ENCODE measurements at regions of chr2 and their contacts with region 1.

Region 1: DNA sequence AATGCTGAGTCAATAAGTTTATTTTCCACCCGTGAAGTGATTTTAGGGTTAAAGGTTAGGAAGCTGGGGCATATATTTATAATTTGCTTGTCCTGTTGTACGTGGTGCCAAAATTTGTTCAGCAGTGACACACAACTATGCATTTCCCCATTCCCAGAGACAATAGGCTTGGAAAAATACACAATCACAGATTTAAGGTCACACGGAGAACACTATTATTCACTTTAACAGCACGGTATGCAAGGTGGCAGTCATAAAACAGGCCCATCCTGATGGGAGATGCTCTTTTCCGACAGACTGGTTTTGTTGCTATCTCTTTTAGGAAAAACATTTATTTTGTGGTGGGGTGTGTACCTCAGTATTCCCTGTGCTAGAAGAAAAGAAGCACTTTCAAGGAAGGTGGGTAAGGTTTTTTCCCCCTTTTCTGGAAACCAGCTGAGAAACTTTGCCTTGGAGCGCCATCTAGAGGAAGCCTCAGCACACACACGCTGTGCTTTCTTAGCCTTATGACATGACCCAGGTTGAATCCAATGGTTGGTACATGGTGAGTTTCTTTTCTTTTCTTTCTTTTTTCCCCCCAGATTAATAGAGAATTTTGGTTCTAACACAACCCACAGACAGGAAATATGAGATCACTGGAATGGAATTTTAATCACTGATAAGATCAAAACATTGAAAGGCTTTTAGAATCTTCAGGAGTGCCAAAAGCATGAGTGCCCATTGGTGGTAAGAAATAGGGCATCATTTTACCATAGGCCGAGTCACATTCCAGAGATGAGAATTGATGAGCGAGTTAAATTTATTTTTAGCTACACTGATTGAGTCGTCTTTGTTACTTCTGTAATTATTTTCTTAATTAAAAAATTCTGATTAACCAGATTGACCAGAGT is 332.1 kb downstream of the AGPS start:
- DNase-seq: peak; percentile 42
- ATAC-seq: peak; percentile 51
- H3K4me3 ChIP-seq: no peak overlapping the region
- H3K4me3 Mint-ChIP-seq: no peak overlapping the region
- H3K27ac ChIP-seq: no peak overlapping the region
- H3K27ac Mint-ChIP-seq: no peak overlapping the region
- H3K4me1 ChIP-seq: no peaks in the 10 kb centered on the region
- H3K4me1 Mint-ChIP-seq: no peaks in the 10 kb centered on the region
- H3K27me3 ChIP-seq: peaks cover 0 to 3% (median 0%) of the 10 kb centered on the region in 4 experiments
- H3K27me3 Mint-ChIP-seq: peaks cover 38% of the 10 kb centered on the region
- CTCF ChIP-seq: peak; percentile 87

Region 2: GRCh38 chr2:177489719-177490301 is 234.8 kb before region 1 on chr2:
- CTCF ChIA-PET with region 1: interaction called, 28 read pairs
- POLR2A ChIA-PET with region 1: no interaction called
- intact Hi-C with region 1: no loop called
- DNase-seq: peak; percentile 4
- ATAC-seq: no peak
- H3K4me3 ChIP-seq: no peak overlapping the region
- H3K4me3 Mint-ChIP-seq: no peak overlapping the region
- H3K27ac ChIP-seq: no peak overlapping the region
- H3K27ac Mint-ChIP-seq: no peak overlapping the region
- H3K4me1 ChIP-seq: no peaks in the 10 kb centered on the region
- H3K4me1 Mint-ChIP-seq: no peaks in the 10 kb centered on the region
- H3K27me3 ChIP-seq: no peaks in the 10 kb centered on the region
- H3K27me3 Mint-ChIP-seq: no peaks in the 10 kb centered on the region
- CTCF ChIP-seq: peak; percentile 53

Measured in B cell (primary cell).